Posterior cingulate gyrus (tissue), 11 donors: ENCODE measurements at regions of chr12 and their contacts with region 1.

Region 1: DNA sequence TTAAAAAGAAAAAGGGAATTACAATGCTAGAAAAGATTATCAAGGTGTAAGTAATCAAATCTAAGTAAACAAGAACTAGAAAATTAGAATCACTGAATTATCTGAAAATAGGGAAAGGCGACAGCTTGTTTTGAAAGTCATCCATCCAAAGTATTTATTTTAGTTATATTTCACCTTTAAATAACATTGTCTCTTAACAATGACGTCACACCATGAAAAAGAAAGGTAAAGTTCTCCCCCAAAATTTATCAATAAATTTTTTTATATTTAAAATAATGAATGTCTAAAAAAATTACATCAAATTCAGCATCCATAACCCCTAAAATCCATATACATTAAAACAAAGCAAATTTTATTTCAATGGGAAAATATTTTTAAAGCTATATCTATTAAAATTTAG is 223.2 kb downstream of the RERGL start:
- DNase-seq: no peak

Region 2: DNA sequence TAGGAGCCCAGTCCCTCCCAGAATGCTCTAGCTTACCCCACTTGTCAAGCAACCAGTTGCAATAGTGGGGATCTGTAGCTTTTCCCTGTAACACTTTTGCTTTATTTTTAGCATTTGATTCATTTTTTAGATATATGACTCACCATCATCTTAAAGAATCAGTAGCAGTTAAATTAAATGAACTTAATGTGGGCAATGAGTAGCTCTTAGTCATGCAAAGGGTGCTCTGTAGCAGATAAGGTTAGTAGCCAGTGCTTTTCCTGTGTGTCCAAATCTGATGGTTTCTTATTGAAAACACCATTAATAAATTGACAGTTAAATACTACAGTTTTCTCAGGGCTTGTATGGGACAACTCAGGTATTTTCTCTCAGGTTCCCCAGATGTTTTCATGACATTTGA is 88.6 kb before region 1 on chr12:
- intact Hi-C with region 1: loop called (anchors 5 kb)
- DNase-seq: no peak